BJ (cell line): ENCODE measurements at regions of chr1 and their contacts with region 1.

Region 1: GRCh38 chr1:75265792-75266191 is 131.6 kb downstream of the LHX8 start:
- DNase-seq: no peak
- H3K4me3 ChIP-seq: no peak overlapping the region
- H3K27me3 ChIP-seq: no peaks in the 10 kb centered on the region
- CTCF ChIP-seq: peak; percentile 55

Region 2: GRCh38 chr1:75133750-75134646 is 131.8 kb before region 1 on chr1 and contains the start of gene LHX8:
- CTCF ChIA-PET with region 1: no interaction called
- POLR2A ChIA-PET with region 1: no interaction called
- DNase-seq: no peak
- H3K4me3 ChIP-seq: no peak within 1 kb of the TSS
- H3K27me3 ChIP-seq: peaks cover 54% of the 10 kb centered on the region
- CTCF ChIP-seq: no peak
- polyA plus RNA-seq, gene LHX8: 0.05 and 0.06 TPM in 2 replicates

Region 3: GRCh38 chr1:75276385-75276784 is 10.6 kb after region 1 on chr1:
- CTCF ChIA-PET with region 1: interaction called, 13 read pairs
- POLR2A ChIA-PET with region 1: no interaction called
- DNase-seq: no peak
- H3K4me3 ChIP-seq: no peak overlapping the region
- H3K27me3 ChIP-seq: no peaks in the 10 kb centered on the region
- CTCF ChIP-seq: no peak